Endothelial cell of umbilical vein (primary cell): ENCODE measurements at regions of chr10 and their contacts with region 1.

Region 1: GRCh38 chr10:129332476-129332875 is 134.6 kb upstream of the MGMT start:
- DNase-seq: peak; percentile 62
- H3K4me3 ChIP-seq: no peak overlapping the region
- H3K27ac ChIP-seq: no peak overlapping the region
- H3K4me1 ChIP-seq: peaks cover 13% of the 10 kb centered on the region
- H3K27me3 ChIP-seq: peaks cover 5 to 11% of the 10 kb centered on the region in 2 experiments
- CTCF ChIP-seq: peak; percentile 70 to 72
- POLR2A ChIP-seq: no peak

Region 2: GRCh38 chr10:129085821-129086220 is 246.7 kb before region 1 on chr10:
- CTCF ChIA-PET with region 1: no interaction called
- POLR2A ChIA-PET with region 1: no interaction called
- dilution Hi-C with region 1: no loop called
- intact Hi-C with region 1: loop called (anchors 5 kb)
- DNase-seq: no peak
- H3K4me3 ChIP-seq: no peak overlapping the region
- H3K27ac ChIP-seq: no peak overlapping the region
- H3K4me1 ChIP-seq: no peaks in the 10 kb centered on the region
- H3K27me3 ChIP-seq: no peaks in the 10 kb centered on the region
- CTCF ChIP-seq: no peak
- POLR2A ChIP-seq: no peak

Region 3: GRCh38 chr10:129305046-129305445 is 27.4 kb before region 1 on chr10:
- CTCF ChIA-PET with region 1: interaction called, 12 read pairs
- POLR2A ChIA-PET with region 1: no interaction called
- dilution Hi-C with region 1: no loop called
- intact Hi-C with region 1: loop called (anchors 2 kb)
- DNase-seq: peak; percentile 73
- H3K4me3 ChIP-seq: peak overlapping the region in 1 of 3 experiments; percentile 7
- H3K27ac ChIP-seq: peak overlapping the region; percentile 61
- H3K4me1 ChIP-seq: peaks cover 14% of the 10 kb centered on the region
- H3K27me3 ChIP-seq: no peaks in the 10 kb centered on the region
- CTCF ChIP-seq: no peak
- POLR2A ChIP-seq: no peak

Region 4: DNA sequence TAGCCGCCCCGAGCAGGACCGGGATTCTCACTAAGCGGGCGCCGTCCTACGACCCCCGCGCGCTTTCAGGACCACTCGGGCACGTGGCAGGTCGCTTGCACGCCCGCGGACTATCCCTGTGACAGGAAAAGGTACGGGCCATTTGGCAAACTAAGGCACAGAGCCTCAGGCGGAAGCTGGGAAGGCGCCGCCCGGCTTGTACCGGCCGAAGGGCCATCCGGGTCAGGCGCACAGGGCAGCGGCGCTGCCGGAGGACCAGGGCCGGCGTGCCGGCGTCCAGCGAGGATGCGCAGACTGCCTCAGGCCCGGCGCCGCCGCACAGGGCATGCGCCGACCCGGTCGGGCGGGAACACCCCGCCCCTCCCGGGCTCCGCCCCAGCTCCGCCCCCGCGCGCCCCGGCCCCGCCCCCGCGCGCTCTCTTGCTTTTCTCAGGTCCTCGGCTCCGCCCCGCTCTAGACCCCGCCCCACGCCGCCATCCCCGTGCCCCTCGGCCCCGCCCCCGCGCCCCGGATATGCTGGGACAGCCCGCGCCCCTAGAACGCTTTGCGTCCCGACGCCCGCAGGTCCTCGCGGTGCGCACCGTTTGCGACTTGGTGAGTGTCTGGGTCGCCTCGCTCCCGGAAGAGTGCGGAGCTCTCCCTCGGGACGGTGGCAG is 134.4 kb after region 1 on chr10 and contains the start of gene MGMT:
- CTCF ChIA-PET with region 1: no interaction called
- POLR2A ChIA-PET with region 1: no interaction called
- dilution Hi-C with region 1: no loop called
- intact Hi-C with region 1: loop called (anchors 5 kb)
- DNase-seq: peak; percentile 50
- H3K4me3 ChIP-seq: peak within 1 kb of the TSS; percentile 34 to 64 (median 63)
- H3K27ac ChIP-seq: peak within 1 kb of the TSS; percentile 25
- H3K4me1 ChIP-seq: peaks cover 10% of the 10 kb centered on the region
- H3K27me3 ChIP-seq: no peaks in the 10 kb centered on the region
- CTCF ChIP-seq: no peak
- POLR2A ChIP-seq: peak; percentile 61
- total RNA-seq, gene MGMT: 11.1 and 15.0 TPM in 2 replicates